Sigmoid colon (tissue), 7 donors: ENCODE measurements at regions of chr12 and their contacts with region 1.

Region 1: GRCh38 chr12:50400598-50401364 is at the start of gene LARP4:
- DNase-seq: peak; percentile 97
- H3K4me3 ChIP-seq: peak within 1 kb of the TSS; percentile 75 to 87 (median 82)
- H3K27ac ChIP-seq: peak within 1 kb of the TSS; percentile 87 to 98 (median 96)
- H3K4me1 ChIP-seq: peaks cover 0 to 40% (median 34%) of the 10 kb centered on the region in 4 donors
- H3K27me3 ChIP-seq: no peaks in the 10 kb centered on the region
- CTCF ChIP-seq: no peak
- EP300 ChIP-seq: no peak
- POLR2A ChIP-seq: peak; percentile 89
- total RNA-seq, gene LARP4: 51.9 to 78.4 (median 59.3) TPM

Region 2: DNA sequence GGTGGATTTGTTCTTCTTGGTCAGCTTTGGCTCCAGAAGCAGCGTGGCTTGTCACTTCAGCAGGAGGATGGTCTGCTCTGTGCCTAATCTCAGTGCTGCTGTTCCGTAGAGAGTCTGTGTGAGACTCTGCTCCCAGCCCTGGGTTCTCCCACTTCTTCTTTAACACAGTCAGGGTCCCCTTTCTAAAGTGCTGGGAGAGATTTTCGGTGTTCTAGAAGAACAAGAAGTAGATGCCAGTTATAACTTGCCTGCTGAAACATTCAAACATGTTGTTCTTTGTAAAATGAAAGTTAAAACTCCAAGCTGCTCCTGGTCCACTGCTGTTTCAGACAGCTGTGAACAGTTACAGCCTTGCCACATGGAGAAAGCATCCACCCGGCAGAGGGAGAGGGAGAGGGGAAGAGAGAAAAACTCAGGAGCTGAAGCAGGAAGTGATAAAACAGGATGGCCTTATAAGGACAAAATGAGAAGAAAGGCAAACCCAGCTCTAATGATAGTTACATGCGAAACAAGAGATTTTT is 178.4 kb before region 1 on chr12:
- intact Hi-C with region 1: loop called (anchors 5 kb)
- DNase-seq: peak; percentile 90
- H3K4me3 ChIP-seq: peak overlapping the region; percentile 41 to 58 (median 52)
- H3K27ac ChIP-seq: peak overlapping the region; percentile 81 to 89 (median 84)
- H3K4me1 ChIP-seq: peaks cover 0 to 44% (median 26%) of the 10 kb centered on the region in 4 donors
- H3K27me3 ChIP-seq: no peaks in the 10 kb centered on the region
- CTCF ChIP-seq: peak in 2 of 4 experiments; percentile 40 to 45
- EP300 ChIP-seq: no peak
- POLR2A ChIP-seq: peak; percentile 17 to 57